ENCODE measurements at regions of chr9 and their contacts with region 1.

Region 1: DNA sequence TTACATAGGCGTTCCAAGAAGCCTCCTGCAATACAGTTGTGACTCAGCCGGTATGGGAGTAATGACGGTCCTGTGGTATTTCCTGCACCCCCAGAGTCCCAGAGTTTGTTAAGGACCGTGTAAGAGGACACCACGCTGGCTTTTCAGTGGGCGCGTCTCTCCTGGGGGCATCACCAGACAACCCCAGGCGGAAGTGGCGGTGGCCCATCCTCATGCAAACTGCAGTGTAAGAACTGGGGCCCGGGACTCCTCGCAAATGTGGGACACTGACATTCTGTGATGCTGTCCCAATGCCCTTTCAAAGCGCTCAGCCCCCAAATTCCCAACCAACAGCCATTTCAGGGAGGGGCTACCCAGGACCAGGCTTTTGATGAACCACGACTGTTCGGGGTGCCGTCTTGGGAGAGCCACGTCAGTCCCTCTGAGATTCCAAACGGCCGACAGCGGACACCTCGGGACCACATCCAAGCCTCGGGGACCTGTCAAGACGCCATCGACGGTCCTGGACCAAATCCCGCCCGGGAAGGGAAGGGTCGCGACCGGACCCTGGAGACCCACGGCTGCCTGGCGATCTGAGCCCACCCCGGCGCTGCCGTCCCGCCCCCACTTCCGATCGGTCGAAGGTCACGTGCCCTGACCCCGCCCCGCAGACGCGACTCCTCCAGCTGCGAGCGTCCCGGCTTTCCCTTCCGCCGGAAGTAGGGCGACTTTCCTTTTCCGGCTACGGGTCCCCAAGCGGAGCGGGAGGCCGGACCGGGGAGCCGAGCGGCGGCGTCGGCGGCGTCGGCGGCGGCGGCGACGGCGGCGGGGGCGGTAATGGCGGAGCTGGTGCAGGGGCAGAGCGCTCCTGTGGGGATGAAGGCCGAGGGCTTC is at the start of gene FUBP3:
- DNase-seq: peak; percentile 97
- H3K4me3 Mint-ChIP-seq: peak within 1 kb of the TSS; percentile 84
- H3K27ac Mint-ChIP-seq: peak within 1 kb of the TSS; percentile 89
- H3K4me1 Mint-ChIP-seq: peaks cover 26% of the 10 kb centered on the region
- H3K27me3 Mint-ChIP-seq: peaks cover 3% of the 10 kb centered on the region
- total RNA-seq, gene FUBP3: 51.1 and 55.8 TPM in 2 replicates

Region 2: DNA sequence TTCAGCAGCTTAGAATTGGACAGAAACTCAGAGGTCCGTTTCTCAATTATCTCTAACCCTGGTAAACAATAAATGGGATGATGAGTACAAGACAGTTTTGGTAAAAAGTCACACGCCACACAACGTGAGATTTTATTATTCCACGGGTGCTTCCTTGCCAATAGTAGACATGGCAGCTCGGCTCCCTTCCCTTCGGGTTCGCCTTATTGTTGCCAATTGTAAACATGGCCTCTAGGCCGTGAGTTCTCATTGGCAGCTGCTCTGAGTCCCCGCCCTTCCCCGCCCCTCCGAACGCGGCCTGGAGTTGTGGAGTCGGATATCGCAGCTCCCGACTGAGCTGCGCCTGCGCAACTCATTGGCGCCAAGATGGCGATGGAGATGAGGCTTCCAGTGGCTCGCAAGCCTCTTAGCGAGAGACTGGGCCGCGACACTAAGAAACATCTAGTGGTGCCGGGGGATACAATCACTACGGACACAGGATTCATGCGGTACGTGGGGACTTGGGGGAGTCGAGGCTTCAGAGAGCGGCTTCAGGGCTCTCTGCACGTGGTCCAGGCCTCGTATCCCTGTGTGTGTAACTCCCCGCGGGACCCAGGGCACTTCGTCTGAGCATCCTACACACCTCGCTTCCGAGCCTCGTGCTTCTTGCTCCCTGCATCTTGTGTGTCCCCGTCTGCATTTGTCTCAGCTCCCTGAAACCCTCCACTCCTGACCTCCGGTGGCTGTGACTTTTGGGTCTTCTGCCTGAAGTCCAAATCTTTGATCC is 114.5 kb after region 1 on chr9 and contains the start of gene EXOSC2:
- intact Hi-C with region 1: loop called (anchors 5 kb)
- DNase-seq: peak; percentile 97
- H3K4me3 Mint-ChIP-seq: peak within 1 kb of the TSS; percentile 89
- H3K27ac Mint-ChIP-seq: peak within 1 kb of the TSS; percentile 93
- H3K4me1 Mint-ChIP-seq: peaks cover 37% of the 10 kb centered on the region
- H3K27me3 Mint-ChIP-seq: no peaks in the 10 kb centered on the region
- total RNA-seq, gene EXOSC2: 109 and 110 TPM in 2 replicates

Measured in activated CD4-positive, alpha-beta T cell treated with anti-CD3 and anti-CD28 coated beads, Interleukin-2, amount 10 ng/mL, durations not matched to agents 24 days and 14 days (primary cell).